GM12878 (cell line): ENCODE measurements at regions of chr14 and their contacts with region 1.

Region 1: DNA sequence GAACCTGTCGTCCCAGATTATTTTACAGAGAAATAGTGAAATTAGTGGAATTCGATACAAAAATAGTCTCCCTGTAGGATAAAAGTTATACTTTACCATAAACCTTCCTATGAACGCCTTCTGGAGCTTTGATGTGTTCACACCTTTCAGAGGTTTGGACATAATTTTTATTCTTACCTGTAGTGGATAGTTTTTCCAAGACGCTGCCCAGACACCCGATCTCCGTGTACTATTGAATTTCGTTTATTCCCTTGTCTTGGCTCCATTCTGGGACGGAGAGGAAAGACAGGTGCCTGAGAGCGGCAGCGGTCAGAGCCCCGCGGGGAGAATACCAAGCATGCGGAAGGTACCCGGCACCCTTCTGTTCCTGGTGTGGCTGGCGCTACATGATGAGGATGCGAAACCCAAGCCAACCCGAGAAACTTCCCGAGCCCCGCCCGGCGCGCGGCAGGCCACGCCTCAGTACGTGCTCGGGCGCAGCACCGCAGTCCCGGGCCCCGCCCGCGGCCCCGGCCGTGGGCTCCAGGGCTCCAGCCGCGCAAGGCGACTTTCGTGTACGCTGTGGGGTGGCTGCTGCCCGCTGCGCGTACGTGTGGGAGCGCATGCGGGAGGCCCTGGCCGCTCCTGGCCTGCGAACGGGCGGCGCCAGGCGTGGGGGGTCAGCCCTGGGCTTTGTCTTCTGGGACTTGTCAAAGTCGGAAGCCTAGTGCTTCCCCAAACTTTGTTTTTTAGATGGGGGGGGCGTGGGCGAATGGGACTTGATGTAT is 11.3 kb upstream of the SNAPC1 start:
- DNase-seq: peak; percentile 83
- ATAC-seq: peak; percentile 93
- H3K4me3 ChIP-seq: peak overlapping the region; percentile 79
- H3K27ac ChIP-seq: peak overlapping the region; percentile 59
- H3K4me1 ChIP-seq: peaks cover 19% of the 10 kb centered on the region
- H3K27me3 ChIP-seq: no peaks in the 10 kb centered on the region
- CTCF ChIP-seq: no peak
- EP300 ChIP-seq: peak; percentile 45 to 66; a peak in 2 of 4 replicates
- POLR2A ChIP-seq: peak; percentile 85
- RAD21 ChIP-seq: no peak

Region 2: GRCh38 chr14:61296719-61297502 is 454.0 kb before region 1 on chr14:
- CTCF ChIA-PET with region 1: no interaction called
- POLR2A ChIA-PET with region 1: no interaction called
- RAD21 ChIA-PET with region 1: interaction called, 6 read pairs
- SMC1A ChIA-PET with region 1: interaction called, 8 read pairs
- in situ Hi-C with region 1: no loop called
- intact Hi-C with region 1: loop called (anchors 10 kb)
- DNase-seq: peak; percentile 23
- ATAC-seq: peak; percentile 89
- H3K4me3 ChIP-seq: no peak overlapping the region
- H3K27ac ChIP-seq: no peak overlapping the region
- H3K4me1 ChIP-seq: peaks cover 12% of the 10 kb centered on the region
- H3K27me3 ChIP-seq: no peaks in the 10 kb centered on the region
- CTCF ChIP-seq: peak; percentile 50 to 66 (median 65)
- EP300 ChIP-seq: no peak
- POLR2A ChIP-seq: no peak
- RAD21 ChIP-seq: peak; percentile 89

Region 3: DNA sequence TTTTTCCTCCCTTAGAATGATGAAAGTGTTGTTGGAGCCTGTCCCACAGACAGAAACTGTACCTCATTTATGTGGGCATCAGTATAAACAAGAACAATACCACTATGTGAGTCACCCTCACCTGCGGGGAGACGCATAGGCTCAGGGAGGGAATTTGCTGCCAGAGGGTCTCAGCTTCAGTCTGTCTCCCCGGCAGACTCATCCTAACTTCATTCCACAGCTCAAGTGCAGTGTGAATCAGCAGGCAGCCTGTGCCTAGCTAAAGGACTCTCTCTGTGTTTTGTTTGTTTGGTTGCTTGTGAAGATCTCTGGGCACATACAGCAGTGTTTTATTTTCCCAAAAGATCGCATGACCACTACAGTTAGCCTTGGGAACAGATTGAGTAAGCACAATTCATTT is 330.6 kb before region 1 on chr14:
- CTCF ChIA-PET with region 1: no interaction called
- POLR2A ChIA-PET with region 1: no interaction called
- RAD21 ChIA-PET with region 1: no interaction called
- SMC1A ChIA-PET with region 1: no interaction called
- in situ Hi-C with region 1: no loop called
- intact Hi-C with region 1: no loop called
- DNase-seq: no peak
- ATAC-seq: no peak
- H3K4me3 ChIP-seq: no peak overlapping the region
- H3K27ac ChIP-seq: no peak overlapping the region
- H3K4me1 ChIP-seq: peaks cover 15% of the 10 kb centered on the region; the same call in 1 of the 2 replicates
- H3K27me3 ChIP-seq: no peaks in the 10 kb centered on the region
- CTCF ChIP-seq: no peak
- EP300 ChIP-seq: no peak
- POLR2A ChIP-seq: no peak
- RAD21 ChIP-seq: no peak

Region 4: GRCh38 chr14:61438504-61438859 is 312.4 kb before region 1 on chr14:
- CTCF ChIA-PET with region 1: no interaction called
- POLR2A ChIA-PET with region 1: no interaction called
- RAD21 ChIA-PET with region 1: no interaction called
- SMC1A ChIA-PET with region 1: no interaction called
- in situ Hi-C with region 1: no loop called
- intact Hi-C with region 1: no loop called
- DNase-seq: peak; percentile 69
- ATAC-seq: peak; percentile 67
- H3K4me3 ChIP-seq: peak overlapping the region; percentile 54; the same call in 1 of the 2 replicates
- H3K27ac ChIP-seq: peak overlapping the region; percentile 93
- H3K4me1 ChIP-seq: peaks cover 34% of the 10 kb centered on the region
- H3K27me3 ChIP-seq: no peaks in the 10 kb centered on the region
- CTCF ChIP-seq: no peak
- EP300 ChIP-seq: no peak
- POLR2A ChIP-seq: no peak
- RAD21 ChIP-seq: no peak

Region 5: DNA sequence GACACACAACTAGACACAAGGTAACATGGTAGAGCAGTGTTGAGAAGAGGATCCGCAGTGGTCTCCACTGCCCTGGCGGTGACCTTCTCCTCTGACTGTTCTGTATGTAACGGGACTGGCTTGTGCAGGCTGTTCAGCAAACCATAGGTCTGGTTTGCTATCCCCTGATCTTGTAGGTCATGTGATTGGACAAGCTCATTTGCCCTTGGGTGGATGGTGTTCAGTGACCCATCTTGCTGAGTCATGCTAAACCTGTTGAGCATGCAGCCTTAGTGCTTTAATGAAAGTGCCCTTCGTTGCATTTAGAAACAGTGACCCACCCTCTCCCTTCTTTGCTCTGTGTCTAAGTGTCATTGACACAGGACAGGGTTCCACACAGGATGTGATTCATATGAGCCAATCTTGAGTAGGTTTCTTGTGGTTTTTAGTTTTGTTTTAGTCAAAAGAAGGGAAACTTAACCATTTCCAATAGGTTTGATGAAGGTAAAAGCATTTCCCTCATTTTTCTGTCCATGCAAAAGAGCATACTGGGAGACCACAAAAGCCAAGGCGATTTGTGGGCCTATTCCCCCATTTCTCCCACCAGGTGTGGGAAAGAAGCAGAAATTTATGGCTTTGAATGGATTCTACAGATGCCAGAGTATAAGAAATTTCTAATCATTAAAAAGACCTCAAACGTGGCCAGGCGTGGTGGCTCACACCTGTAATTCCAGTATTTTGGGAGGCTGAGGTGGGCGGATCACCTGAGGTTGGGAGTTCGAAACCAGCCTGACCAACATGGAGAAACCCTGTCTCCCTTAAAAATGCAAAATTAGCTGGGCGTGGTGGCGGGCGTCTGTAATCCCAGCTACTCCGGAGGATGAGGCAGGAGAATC is 88.2 kb before region 1 on chr14:
- CTCF ChIA-PET with region 1: no interaction called
- POLR2A ChIA-PET with region 1: interaction called, 6 read pairs
- RAD21 ChIA-PET with region 1: interaction called, 19 read pairs
- SMC1A ChIA-PET with region 1: interaction called, 23 read pairs
- in situ Hi-C with region 1: no loop called
- intact Hi-C with region 1: no loop called
- DNase-seq: peak; percentile 100
- ATAC-seq: peak; percentile 87
- H3K4me3 ChIP-seq: peak overlapping the region; percentile 50
- H3K27ac ChIP-seq: peak overlapping the region; percentile 79
- H3K4me1 ChIP-seq: peaks cover 34% of the 10 kb centered on the region
- H3K27me3 ChIP-seq: no peaks in the 10 kb centered on the region
- CTCF ChIP-seq: 0 out of 6 replicates have a peak, but pooled peaks of 1 of the 3 experiments have one; percentile 13
- EP300 ChIP-seq: peak; percentile 73 to 93; a peak in 3 of 4 replicates
- POLR2A ChIP-seq: peak; percentile 82
- RAD21 ChIP-seq: peak; percentile 29; the same call in 1 of the 2 replicates

Region 6: DNA sequence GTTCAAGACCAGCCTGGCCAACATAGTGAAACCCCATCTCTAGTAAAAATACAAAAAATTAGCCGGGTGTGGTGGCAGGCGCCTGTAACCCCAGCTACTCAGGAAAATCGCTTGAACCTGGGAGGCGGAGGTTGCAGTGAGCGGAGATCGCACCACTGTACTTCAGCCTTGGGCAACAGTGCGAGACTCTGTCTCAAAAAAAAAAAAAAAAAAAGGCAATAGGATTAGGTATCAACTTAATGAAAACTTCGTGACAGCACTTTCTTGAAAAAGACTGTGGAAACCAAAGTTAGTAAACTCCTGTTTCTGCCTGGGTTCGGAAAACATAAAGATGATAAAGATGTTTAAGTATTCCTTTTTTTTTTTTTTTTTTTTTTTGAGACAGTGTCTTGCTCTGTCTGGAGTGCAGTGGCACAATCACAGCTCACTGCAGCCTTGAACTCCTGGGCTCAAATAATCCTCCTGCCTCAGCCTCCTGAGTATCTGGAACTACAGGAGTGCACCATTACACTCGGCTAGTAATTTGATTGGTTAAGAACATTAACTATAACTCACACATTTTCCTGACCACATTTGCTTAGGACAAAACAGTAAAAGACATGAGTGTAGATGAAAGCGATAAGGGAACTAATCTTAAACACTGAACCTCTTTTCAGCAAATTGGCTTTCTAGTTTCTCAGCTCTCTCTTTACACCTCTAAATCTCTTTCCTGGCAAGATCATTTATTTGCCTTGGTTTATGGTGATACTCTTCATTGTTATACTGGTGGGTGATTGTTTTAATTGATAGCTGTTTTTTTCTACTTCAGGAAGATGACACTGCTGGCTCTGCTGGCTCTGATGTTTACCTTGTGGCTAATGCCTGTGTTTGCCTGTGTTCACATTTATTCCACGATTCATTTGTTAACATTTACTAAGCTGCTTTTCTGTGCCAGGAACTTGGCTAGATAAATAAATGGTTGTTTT is 39.8 kb before region 1 on chr14:
- CTCF ChIA-PET with region 1: interaction called, 5 read pairs
- POLR2A ChIA-PET with region 1: interaction called, 8 read pairs
- RAD21 ChIA-PET with region 1: interaction called, 10 read pairs
- SMC1A ChIA-PET with region 1: interaction called, 114 read pairs
- in situ Hi-C with region 1: no loop called
- intact Hi-C with region 1: no loop called
- DNase-seq: no peak
- ATAC-seq: peak; percentile 43
- H3K4me3 ChIP-seq: 0 out of 2 replicates have a peak overlapping the region, but pooled peaks have one; percentile 17
- H3K27ac ChIP-seq: peak overlapping the region; percentile 33; the same call in 1 of the 2 replicates
- H3K4me1 ChIP-seq: peaks cover 36% of the 10 kb centered on the region
- H3K27me3 ChIP-seq: no peaks in the 10 kb centered on the region
- CTCF ChIP-seq: no peak
- EP300 ChIP-seq: no peak
- POLR2A ChIP-seq: no peak
- RAD21 ChIP-seq: no peak

Region 7: DNA sequence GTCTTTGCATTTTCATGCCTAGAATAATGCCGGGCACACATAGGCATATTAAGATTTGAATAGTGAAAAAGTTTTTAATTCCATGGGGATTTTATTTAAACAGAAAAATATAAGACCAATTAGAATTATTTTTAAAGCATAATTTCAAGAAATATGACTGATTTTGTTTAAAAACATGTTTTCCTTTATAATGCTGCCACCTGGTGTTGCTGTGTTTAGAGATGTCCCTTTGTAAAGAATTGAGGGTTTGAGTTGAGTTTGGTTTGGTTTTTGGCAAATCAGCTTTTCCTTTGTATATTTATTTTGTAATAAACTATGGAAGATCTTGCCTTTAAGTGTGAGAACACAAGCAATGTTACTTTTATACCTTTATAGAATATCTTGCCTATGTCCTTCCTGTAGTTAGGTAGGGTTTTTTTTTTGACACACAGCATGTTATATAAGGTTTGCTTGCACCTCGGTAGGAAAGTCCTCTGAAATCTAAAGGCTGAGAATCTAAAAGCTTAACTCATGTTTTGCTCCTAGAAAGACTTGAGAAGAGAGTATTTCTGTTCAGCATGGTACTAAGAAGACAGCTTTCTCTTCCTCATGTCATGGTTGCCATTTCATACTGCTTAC is 20.0 kb before region 1 on chr14:
- CTCF ChIA-PET with region 1: interaction called, 10 read pairs
- POLR2A ChIA-PET with region 1: interaction called, 3 read pairs
- RAD21 ChIA-PET with region 1: interaction called, 8 read pairs
- SMC1A ChIA-PET with region 1: interaction called, 19 read pairs
- in situ Hi-C with region 1: no loop called
- intact Hi-C with region 1: no loop called
- DNase-seq: no peak
- ATAC-seq: 0 out of 3 replicates have a peak, but pooled peaks have one; percentile 25
- H3K4me3 ChIP-seq: no peak overlapping the region
- H3K27ac ChIP-seq: no peak overlapping the region
- H3K4me1 ChIP-seq: no peaks in the 10 kb centered on the region
- H3K27me3 ChIP-seq: no peaks in the 10 kb centered on the region
- CTCF ChIP-seq: peak in 1 of 3 experiments; percentile 25; a peak in 2 of 6 replicates
- EP300 ChIP-seq: no peak
- POLR2A ChIP-seq: no peak
- RAD21 ChIP-seq: peak; percentile 62

Region 8: DNA sequence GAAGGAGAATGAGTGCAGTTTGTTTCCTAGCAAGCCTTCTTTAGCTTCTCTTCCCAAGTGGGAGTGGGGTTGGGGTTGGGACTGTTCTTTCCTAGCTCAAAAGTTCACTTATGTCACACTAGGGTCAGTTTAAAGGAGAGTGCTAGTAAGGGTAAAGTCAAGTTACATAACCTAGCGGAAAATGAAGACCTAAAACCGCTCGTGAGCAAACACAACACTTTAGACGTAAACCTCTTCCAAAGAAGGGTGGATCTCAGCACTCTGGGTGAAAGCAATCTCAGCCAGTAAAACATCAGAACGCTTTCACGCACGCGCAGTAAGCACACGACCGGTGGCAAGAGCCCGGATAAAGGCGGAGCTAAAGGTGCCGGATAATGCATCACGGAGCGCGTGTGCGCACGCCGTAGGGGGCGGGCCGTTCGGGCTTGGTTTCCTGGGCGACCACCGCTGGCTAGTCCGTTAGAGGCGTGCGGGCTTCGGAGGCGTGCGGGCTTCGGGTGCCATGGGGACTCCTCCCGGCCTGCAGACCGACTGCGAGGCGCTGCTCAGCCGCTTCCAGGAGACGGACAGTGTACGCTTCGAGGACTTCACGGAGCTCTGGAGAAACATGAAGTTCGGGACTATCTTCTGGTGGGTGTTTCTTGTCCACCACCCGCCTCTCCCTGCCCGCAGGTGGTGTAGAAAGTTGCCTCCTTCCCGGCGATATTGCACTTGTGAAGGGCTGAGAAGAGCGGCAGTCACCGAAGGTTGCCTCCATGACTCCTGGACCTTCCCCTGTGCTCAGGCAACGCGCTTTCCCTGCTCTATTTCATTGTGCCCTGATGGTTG is 11.3 kb after region 1 on chr14 and contains the start of gene SNAPC1:
- CTCF ChIA-PET with region 1: interaction called, 14 read pairs
- POLR2A ChIA-PET with region 1: interaction called, 130 read pairs
- RAD21 ChIA-PET with region 1: interaction called, 102 read pairs
- SMC1A ChIA-PET with region 1: interaction called, 122 read pairs
- in situ Hi-C with region 1: no loop called
- intact Hi-C with region 1: no loop called
- DNase-seq: peak; percentile 96
- ATAC-seq: peak; percentile 99
- H3K4me3 ChIP-seq: peak within 1 kb of the TSS; percentile 98
- H3K27ac ChIP-seq: peak within 1 kb of the TSS; percentile 87
- H3K4me1 ChIP-seq: no peaks in the 10 kb centered on the region; the same call in 1 of the 2 replicates
- H3K27me3 ChIP-seq: no peaks in the 10 kb centered on the region
- CTCF ChIP-seq: no peak
- EP300 ChIP-seq: no peak
- POLR2A ChIP-seq: peak; percentile 93
- RAD21 ChIP-seq: no peak
- polyA plus RNA-seq, gene SNAPC1: 5.2 to 7.0 TPM